Natural killer cell (primary cell): ENCODE measurements at regions of chr22 and their contacts with region 1.

Region 1: DNA sequence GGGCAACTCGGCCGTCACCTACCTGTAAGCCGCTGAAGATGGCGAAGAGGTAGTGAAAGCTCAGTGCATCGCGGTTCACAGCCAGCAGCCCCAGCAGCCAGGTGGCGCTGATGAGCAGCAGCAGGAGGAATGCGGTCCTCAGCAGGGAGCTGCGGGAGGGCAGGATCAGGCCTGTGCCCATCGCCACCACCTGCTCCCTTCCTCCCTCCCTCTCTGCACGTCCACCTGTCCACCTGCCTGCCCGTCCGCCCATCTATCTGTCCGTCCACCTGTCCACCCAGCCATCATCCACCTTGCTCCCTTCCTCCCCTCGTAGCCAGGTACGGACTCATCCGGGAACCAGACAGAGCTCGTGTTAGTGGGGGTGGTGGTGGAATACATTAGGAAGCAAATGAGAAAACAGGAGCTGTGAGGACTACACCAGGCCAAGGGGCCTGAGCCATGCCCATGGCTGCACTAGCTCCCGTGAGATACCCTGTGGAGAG is 32.2 kb downstream of the TRMU start:
- DNase-seq: peak; percentile 76 to 89
- ATAC-seq: peak; percentile 45 to 58 (median 47)
- H3K4me3 ChIP-seq: no peak overlapping the region
- H3K4me3 Mint-ChIP-seq: peak overlapping the region; percentile 9
- H3K27ac ChIP-seq: no peak overlapping the region
- H3K27ac Mint-ChIP-seq: peak overlapping the region in 1 of 2 donors; percentile 51
- H3K4me1 ChIP-seq: peaks cover 71% of the 10 kb centered on the region
- H3K4me1 Mint-ChIP-seq: peaks cover 38 to 57% of the 10 kb centered on the region in 2 donors
- H3K27me3 ChIP-seq: no peaks in the 10 kb centered on the region
- H3K27me3 Mint-ChIP-seq: peaks cover 0 to 5% of the 10 kb centered on the region in 2 donors
- CTCF ChIP-seq: peak; percentile 91

Region 2: DNA sequence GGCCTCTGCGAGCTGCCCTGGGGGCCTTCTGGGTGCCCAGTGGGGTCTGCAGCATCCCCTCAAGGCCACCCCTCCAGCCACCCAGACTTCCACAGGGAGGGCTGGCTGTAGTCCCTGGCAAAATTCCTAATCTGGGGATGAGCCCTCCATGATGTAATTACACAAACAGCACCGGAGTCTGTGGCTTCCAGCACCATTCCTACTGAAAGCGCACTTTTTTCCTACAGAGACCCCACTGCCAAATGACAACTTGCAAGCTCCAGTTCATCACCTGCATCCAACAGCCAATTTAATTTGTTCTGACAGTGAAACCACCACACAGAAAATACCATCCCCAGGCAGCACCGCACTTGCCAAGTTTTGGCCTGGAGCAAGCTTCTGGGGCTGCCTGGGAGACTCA is 38.2 kb after region 1 on chr22:
- intact Hi-C with region 1: loop called (anchors 2 kb)
- DNase-seq: no peak
- ATAC-seq: no peak
- H3K4me3 ChIP-seq: no peak overlapping the region
- H3K4me3 Mint-ChIP-seq: no peak overlapping the region
- H3K27ac ChIP-seq: no peak overlapping the region
- H3K27ac Mint-ChIP-seq: no peak overlapping the region
- H3K4me1 ChIP-seq: peaks cover 36% of the 10 kb centered on the region
- H3K4me1 Mint-ChIP-seq: peaks cover 21 to 27% of the 10 kb centered on the region in 2 donors
- H3K27me3 ChIP-seq: no peaks in the 10 kb centered on the region
- H3K27me3 Mint-ChIP-seq: peaks cover 9 to 19% of the 10 kb centered on the region in 2 donors
- CTCF ChIP-seq: no peak

Region 3: DNA sequence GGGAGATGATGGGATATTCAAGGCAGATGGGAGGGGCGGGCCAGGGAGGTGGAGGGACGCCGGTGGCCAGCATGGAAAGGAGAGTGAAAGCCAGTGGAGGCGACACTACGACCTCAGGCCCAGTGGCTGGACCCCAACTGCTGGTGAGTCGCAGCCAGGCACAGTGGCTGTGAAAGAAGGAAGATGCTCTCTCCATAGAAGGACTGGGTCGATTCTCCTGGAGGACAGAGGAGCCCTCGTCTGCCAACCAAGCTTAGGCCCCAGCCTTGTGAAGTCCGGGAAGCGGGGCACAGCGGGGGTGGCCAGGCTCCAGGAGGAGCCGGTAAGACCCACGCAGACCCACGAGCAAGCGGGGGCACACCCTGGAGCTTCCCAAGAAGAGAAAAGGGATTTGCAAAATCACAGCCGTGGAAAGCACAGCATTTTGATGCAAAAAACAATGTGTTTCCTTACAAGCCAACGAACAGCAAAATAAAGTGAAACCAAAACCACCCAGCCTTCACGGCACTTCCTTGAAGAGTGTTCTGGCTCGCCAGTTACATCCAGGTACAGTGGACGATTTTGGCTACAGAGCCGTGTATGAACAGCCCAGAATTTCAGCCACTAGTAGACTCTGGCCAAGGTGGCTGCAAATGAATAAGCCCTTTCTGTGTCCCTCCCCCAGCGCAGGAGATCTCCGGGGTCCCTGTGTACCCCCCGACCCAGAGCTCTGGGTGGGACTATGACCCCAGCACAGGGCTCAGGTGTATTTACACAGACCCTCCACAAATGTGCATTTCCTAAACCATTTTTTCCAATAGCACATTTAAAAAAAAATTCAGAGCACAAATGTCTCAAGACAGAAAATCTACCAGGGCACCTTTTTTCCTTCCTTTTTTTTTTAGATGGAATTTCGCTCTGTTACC is 64.7 kb after region 1 on chr22:
- intact Hi-C with region 1: loop called (anchors 2 kb)
- DNase-seq: peak; percentile 23 to 75
- ATAC-seq: peak; percentile 66 to 95 (median 86)
- H3K4me3 ChIP-seq: peak overlapping the region; percentile 65
- H3K4me3 Mint-ChIP-seq: peak overlapping the region; percentile 88
- H3K27ac ChIP-seq: peak overlapping the region; percentile 82
- H3K27ac Mint-ChIP-seq: peak overlapping the region; percentile 83 to 91
- H3K4me1 ChIP-seq: peaks cover 16% of the 10 kb centered on the region
- H3K4me1 Mint-ChIP-seq: peaks cover 12 to 17% of the 10 kb centered on the region in 2 donors
- H3K27me3 ChIP-seq: no peaks in the 10 kb centered on the region
- H3K27me3 Mint-ChIP-seq: no peaks in the 10 kb centered on the region
- CTCF ChIP-seq: no peak